Activated CD4-positive, alpha-beta memory T cell treated with anti-CD3 and anti-CD28 coated beads for 36 hours (primary cell): ENCODE measurements at regions of chr13 and their contacts with region 1.

Region 1: GRCh38 chr13:107211073-107211472 is 643.1 kb upstream of the ARGLU1 start:
- DNase-seq: peak; percentile 63
- H3K4me3 Mint-ChIP-seq: no peak overlapping the region
- H3K27ac Mint-ChIP-seq: no peak overlapping the region
- H3K4me1 Mint-ChIP-seq: no peaks in the 10 kb centered on the region
- H3K27me3 Mint-ChIP-seq: no peaks in the 10 kb centered on the region

Region 2: DNA sequence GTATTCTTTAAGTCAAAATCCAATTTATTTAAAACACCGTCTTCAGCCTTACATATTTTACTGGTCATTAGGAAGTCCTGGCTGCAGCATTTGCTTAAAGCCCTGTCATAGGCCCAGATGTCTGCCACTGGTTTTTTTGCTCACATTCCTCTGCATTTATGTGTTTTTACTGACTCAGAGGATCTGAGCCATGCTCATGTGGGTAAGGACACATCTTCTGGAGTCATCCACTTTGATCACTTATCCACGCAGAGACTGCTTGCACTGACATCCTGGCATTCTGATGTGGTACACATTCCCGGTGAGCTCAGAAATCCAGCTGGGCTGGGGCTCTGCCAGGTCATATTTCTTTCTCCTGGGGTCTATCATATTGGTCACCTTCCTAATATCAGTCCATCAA is 111.4 kb before region 1 on chr13:
- CTCF ChIA-PET with region 1: no interaction called
- POLR2A ChIA-PET with region 1: no interaction called
- intact Hi-C with region 1: no loop called
- DNase-seq: no peak
- H3K4me3 Mint-ChIP-seq: no peak overlapping the region
- H3K27ac Mint-ChIP-seq: no peak overlapping the region
- H3K4me1 Mint-ChIP-seq: no peaks in the 10 kb centered on the region
- H3K27me3 Mint-ChIP-seq: no peaks in the 10 kb centered on the region

Region 3: DNA sequence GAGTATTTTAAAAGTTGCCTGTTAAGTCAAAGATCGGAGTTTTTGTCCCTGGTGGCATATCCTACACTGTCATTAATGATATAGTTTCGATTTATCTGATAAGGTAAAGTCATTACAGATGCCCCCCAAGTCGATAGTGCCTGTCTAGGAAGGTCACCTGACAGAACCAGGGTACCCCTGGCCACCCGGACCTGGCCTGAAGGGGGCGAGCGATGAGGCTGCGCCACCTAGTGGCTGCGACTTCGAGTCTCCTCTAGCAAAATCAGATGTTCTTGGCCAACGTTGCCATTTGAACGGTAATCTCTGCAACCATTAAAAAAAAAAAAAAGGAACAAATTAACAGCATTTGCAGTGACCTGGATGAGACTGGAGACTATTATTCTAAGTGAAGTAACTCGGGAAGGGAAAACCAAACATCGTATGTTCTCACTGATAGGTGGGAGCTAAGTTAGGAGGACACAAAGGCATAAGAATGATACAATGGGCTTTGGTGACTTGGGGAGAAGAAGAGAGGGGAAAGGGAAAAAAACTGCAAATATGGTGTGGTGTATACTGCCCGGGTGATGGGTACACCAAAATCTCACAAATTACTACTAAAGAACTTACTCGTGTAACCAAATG is 439.1 kb after region 1 on chr13:
- CTCF ChIA-PET with region 1: interaction called, 12 read pairs
- POLR2A ChIA-PET with region 1: no interaction called
- intact Hi-C with region 1: no loop called
- DNase-seq: peak; percentile 33
- H3K4me3 Mint-ChIP-seq: no peak overlapping the region
- H3K27ac Mint-ChIP-seq: no peak overlapping the region
- H3K4me1 Mint-ChIP-seq: no peaks in the 10 kb centered on the region
- H3K27me3 Mint-ChIP-seq: peaks cover 2% of the 10 kb centered on the region

Region 4: GRCh38 chr13:107867701-107868661 is 656.9 kb after region 1 on chr13:
- CTCF ChIA-PET with region 1: no interaction called
- POLR2A ChIA-PET with region 1: no interaction called
- intact Hi-C with region 1: loop called (anchors 5 kb)
- DNase-seq: no peak
- H3K4me3 Mint-ChIP-seq: peak overlapping the region; percentile 49
- H3K27ac Mint-ChIP-seq: no peak overlapping the region
- H3K4me1 Mint-ChIP-seq: peaks cover 9% of the 10 kb centered on the region
- H3K27me3 Mint-ChIP-seq: peaks cover 32% of the 10 kb centered on the region

Region 5: DNA sequence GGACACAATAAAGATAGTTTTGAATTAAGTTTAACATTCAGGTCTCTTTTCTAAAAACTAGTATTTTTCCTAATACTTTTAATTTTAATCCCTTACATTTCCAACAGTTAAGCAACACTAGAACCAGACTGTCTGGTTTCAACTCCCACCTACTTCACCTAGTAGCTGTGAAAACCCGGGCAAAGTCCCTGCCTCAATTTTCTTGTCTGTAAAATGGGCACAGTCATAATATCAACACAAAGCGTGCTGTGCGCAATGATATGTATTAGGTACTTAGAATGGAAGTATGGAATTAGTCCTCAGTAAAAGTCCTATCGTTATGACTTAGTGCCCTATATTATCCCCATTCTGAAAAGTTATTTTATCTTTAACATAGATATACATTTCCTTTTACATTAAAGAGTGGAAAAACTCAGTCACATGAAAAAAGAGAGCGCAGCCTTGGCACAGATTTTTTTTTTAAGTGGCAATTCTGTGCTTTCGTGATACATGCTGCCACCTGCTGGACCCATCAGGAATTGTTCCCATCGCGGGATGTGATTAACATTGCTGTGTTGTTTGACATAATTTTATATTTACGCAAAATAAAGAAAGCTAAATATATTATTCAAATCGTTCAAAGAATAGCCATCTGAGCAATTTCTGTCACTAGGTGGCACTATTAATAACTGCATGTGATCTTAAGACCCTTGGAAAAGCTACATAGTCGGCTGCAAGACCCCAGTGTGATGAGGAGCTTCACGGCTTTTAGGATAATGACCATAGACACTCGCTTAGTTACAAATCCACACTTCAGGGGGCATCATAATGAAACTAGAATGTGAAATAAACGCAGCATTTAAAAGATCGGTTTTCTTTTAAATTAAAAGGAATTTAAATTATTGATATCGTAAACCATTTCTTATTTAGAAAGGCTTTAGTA is 944.4 kb after region 1 on chr13:
- CTCF ChIA-PET with region 1: interaction called, 32 read pairs
- POLR2A ChIA-PET with region 1: no interaction called
- intact Hi-C with region 1: loop called (anchors 1 kb)
- DNase-seq: peak; percentile 64
- H3K4me3 Mint-ChIP-seq: no peak overlapping the region
- H3K27ac Mint-ChIP-seq: no peak overlapping the region
- H3K4me1 Mint-ChIP-seq: no peaks in the 10 kb centered on the region
- H3K27me3 Mint-ChIP-seq: peaks cover 10% of the 10 kb centered on the region